AG04449 (cell line): ENCODE measurements at regions of chr14 and their contacts with region 1.

Region 1: GRCh38 chr14:66070509-66071319 is 415.5 kb upstream of the CCDC196 start:
- DNase-seq: no peak
- H3K4me3 ChIP-seq: no peak overlapping the region
- CTCF ChIP-seq: peak; percentile 85

Region 2: GRCh38 chr14:65704850-65705249 is 365.9 kb before region 1 on chr14:
- CTCF ChIA-PET with region 1: no interaction called
- POLR2A ChIA-PET with region 1: no interaction called
- DNase-seq: no peak
- H3K4me3 ChIP-seq: no peak overlapping the region
- CTCF ChIP-seq: no peak

Region 3: GRCh38 chr14:66056926-66057552 is 13.7 kb before region 1 on chr14:
- CTCF ChIA-PET with region 1: interaction called, 27 read pairs
- POLR2A ChIA-PET with region 1: no interaction called
- DNase-seq: no peak
- H3K4me3 ChIP-seq: no peak overlapping the region
- CTCF ChIP-seq: no peak

Region 4: DNA sequence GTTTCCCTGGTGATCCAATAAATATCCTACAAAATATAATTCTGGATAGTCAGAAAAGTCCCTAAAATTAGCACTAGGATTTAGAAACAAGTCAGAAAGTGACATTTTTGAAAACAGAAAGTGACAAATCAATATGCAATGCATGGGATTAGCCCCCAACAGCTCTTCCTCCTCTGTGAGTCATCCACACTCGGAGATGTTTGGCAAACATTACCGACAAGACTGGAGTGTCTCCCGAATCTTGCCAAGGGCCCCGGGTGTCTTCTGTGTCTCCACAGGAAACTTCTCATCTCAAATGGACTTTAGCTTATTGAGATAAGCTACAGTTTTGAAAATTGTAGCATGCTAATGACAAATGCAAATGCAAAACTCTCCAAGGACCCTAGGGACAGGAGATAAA is 16.5 kb after region 1 on chr14:
- CTCF ChIA-PET with region 1: interaction called, 14 read pairs
- POLR2A ChIA-PET with region 1: no interaction called
- DNase-seq: no peak
- H3K4me3 ChIP-seq: no peak overlapping the region
- CTCF ChIP-seq: no peak